ENCODE measurements at regions of chr4 and their contacts with region 1.

Region 1: DNA sequence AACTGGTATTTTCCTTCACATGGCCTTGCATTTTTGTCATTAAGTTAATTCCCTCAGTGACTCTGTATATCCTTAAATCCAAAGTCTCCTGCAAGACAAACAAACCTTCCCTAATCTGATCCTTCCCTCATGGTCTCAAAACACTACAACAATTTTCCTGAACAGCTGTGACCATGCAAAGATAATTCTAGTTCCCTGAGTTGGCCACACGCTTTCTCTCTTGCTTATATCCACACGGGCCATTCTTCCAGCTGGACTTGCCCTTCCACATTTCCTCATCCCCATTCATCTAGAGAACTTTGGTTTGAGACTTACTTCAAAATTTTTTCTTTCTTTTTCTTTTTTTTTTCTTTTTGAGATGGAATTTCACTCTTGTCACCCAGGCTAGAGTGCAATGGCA is 1590.7 kb downstream of the STIM2 start:
- DNase-seq: no peak
- H3K4me3 ChIP-seq: no peak overlapping the region
- H3K27ac ChIP-seq: no peak overlapping the region
- H3K4me1 ChIP-seq: no peaks in the 10 kb centered on the region
- H3K27me3 ChIP-seq: no peaks in the 10 kb centered on the region
- CTCF ChIP-seq: no peak
- POLR2A ChIP-seq: no peak

Region 2: GRCh38 chr4:28421221-28421620 is 30.1 kb before region 1 on chr4:
- intact Hi-C with region 1: loop called (anchors 1 kb)
- DNase-seq: no peak
- H3K4me3 ChIP-seq: no peak overlapping the region
- H3K27ac ChIP-seq: no peak overlapping the region
- H3K4me1 ChIP-seq: no peaks in the 10 kb centered on the region
- H3K27me3 ChIP-seq: no peaks in the 10 kb centered on the region
- CTCF ChIP-seq: no peak
- POLR2A ChIP-seq: no peak